Panc1 (cell line): ENCODE measurements at regions of chr5 and their contacts with region 1.

Region 1: GRCh38 chr5:84045964-84046363 is 325.3 kb upstream of the HAPLN1 start:
- DNase-seq: no peak
- ATAC-seq: no peak
- H3K4me3 ChIP-seq: no peak overlapping the region
- H3K27ac ChIP-seq: no peak overlapping the region
- H3K4me1 ChIP-seq: no peaks in the 10 kb centered on the region
- H3K27me3 ChIP-seq: no peaks in the 10 kb centered on the region
- CTCF ChIP-seq: no peak

Region 2: DNA sequence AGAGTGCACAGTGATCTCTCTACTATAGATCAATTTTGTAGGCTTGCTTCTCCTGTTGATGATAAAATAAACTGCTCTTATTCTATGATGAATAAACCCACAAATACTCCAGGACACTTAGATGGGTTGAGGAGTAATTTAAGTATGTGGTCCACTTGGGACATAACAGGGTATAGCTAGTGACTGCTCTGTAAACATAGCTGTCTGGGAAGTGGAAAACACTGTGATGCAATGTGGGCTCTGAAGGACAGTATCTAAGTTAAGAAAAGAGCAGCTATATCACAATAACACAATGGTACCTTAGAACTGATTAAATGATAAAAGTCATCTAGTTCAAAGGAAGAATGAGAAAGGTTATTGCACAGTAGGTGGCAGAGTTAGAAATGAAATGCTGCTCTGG is 31.0 kb before region 1 on chr5:
- CTCF ChIA-PET with region 1: no interaction called
- POLR2A ChIA-PET with region 1: interaction called, 12 read pairs
- in situ Hi-C with region 1: no loop called
- intact Hi-C with region 1: no loop called
- DNase-seq: no peak
- ATAC-seq: no peak
- H3K4me3 ChIP-seq: no peak overlapping the region
- H3K27ac ChIP-seq: no peak overlapping the region
- H3K4me1 ChIP-seq: no peaks in the 10 kb centered on the region
- H3K27me3 ChIP-seq: no peaks in the 10 kb centered on the region
- CTCF ChIP-seq: no peak